ENCODE measurements at regions of chr12 and their contacts with region 1.

Region 1: GRCh38 chr12:11059784-11060183 is 2.3 kb downstream of the TAS2R46 start:
- DNase-seq: no peak
- H3K4me3 ChIP-seq: no peak overlapping the region
- H3K27ac ChIP-seq: no peak overlapping the region
- H3K4me1 ChIP-seq: no peaks in the 10 kb centered on the region
- H3K27me3 ChIP-seq: no peaks in the 10 kb centered on the region
- CTCF ChIP-seq: no peak
- POLR2A ChIP-seq: no peak

Region 2: DNA sequence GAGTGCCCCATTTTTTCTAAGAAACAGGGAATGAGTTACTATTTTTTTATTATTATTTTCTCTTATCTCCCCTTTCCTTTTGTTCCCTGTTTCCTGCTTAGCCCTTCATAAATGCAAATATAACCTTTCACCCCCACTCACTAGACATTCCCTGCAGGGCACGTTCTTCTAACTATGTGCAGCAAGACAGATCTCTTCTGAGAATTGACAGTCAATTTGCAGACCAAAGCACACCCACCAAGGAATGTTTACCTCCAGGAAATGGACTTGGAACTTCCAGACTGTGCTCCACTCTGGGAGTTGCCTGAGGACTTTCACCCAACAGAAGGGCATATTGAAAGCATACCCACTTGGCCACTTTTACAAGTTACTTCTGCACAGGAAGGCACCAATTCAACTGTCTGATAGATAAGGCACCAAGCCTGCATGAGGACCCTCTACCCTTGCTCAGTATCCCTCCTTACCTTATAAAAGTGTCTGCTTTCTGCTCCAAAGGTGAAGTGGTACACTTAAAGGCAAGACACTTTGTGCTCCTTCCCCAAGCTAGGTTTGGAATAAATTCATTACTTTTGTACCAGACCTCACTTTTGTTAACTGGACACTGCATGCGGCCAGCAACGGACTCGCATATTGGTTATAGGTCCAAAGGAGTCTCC is 43.9 kb before region 1 on chr12:
- CTCF ChIA-PET with region 1: no interaction called
- POLR2A ChIA-PET with region 1: no interaction called
- dilution Hi-C with region 1: no loop called
- intact Hi-C with region 1: no loop called
- DNase-seq: peak; percentile 86
- H3K4me3 ChIP-seq: no peak overlapping the region
- H3K27ac ChIP-seq: no peak overlapping the region
- H3K4me1 ChIP-seq: peaks cover 13% of the 10 kb centered on the region
- H3K27me3 ChIP-seq: no peaks in the 10 kb centered on the region
- CTCF ChIP-seq: no peak
- POLR2A ChIP-seq: no peak

Region 3: GRCh38 chr12:11085419-11085818 is 25.6 kb after region 1 on chr12:
- CTCF ChIA-PET with region 1: no interaction called
- POLR2A ChIA-PET with region 1: no interaction called
- dilution Hi-C with region 1: no loop called
- intact Hi-C with region 1: loop called (anchors 1 kb)
- DNase-seq: peak; percentile 23
- H3K4me3 ChIP-seq: no peak overlapping the region
- H3K27ac ChIP-seq: peak overlapping the region; percentile 23
- H3K4me1 ChIP-seq: no peaks in the 10 kb centered on the region
- H3K27me3 ChIP-seq: no peaks in the 10 kb centered on the region
- CTCF ChIP-seq: no peak
- POLR2A ChIP-seq: no peak

Region 4: DNA sequence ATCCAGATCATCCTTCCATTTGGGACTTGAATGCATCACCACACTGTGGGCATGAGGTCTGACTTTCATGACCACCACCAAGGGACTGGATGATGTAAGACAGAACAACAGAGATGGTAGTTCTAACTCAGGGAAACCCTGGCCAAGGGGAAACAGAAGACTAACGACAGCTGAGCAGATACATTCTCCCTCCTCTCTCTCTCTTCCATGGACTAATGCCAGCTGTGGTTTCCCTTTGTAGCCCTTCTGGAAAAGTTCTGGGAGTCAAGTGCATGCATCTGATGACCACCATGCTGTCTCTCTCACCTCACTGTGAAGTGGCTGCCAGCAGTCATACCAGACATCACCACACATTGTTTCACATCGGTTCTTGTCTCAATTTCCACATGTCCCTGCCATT is 71.2 kb after region 1 on chr12:
- CTCF ChIA-PET with region 1: interaction called, 3 read pairs
- POLR2A ChIA-PET with region 1: no interaction called
- dilution Hi-C with region 1: no loop called
- intact Hi-C with region 1: loop called (anchors 2 kb)
- DNase-seq: no peak
- H3K4me3 ChIP-seq: no peak overlapping the region
- H3K27ac ChIP-seq: no peak overlapping the region
- H3K4me1 ChIP-seq: no peaks in the 10 kb centered on the region
- H3K27me3 ChIP-seq: no peaks in the 10 kb centered on the region
- CTCF ChIP-seq: no peak
- POLR2A ChIP-seq: no peak

Measured in endothelial cell of umbilical vein (primary cell).